ENCODE measurements at regions of chr10 and their contacts with region 1.

Region 1: GRCh38 chr10:102450194-102450938 is 977 bp downstream of the C10orf95 start:
- DNase-seq: peak; percentile 76
- H3K4me3 Mint-ChIP-seq: peak overlapping the region; percentile 89
- H3K27ac Mint-ChIP-seq: peak overlapping the region; percentile 80
- H3K4me1 Mint-ChIP-seq: peaks cover 7% of the 10 kb centered on the region
- H3K27me3 Mint-ChIP-seq: no peaks in the 10 kb centered on the region
- CTCF ChIP-seq: no peak

Region 2: GRCh38 chr10:102151774-102152544 is 298.4 kb before region 1 on chr10 and contains the start of gene NOLC1:
- CTCF ChIA-PET with region 1: no interaction called
- POLR2A ChIA-PET with region 1: interaction called, 16 read pairs
- intact Hi-C with region 1: no loop called
- DNase-seq: peak; percentile 98
- H3K4me3 Mint-ChIP-seq: peak within 1 kb of the TSS; percentile 75
- H3K27ac Mint-ChIP-seq: peak within 1 kb of the TSS; percentile 92
- H3K4me1 Mint-ChIP-seq: peaks cover 14% of the 10 kb centered on the region
- H3K27me3 Mint-ChIP-seq: no peaks in the 10 kb centered on the region
- CTCF ChIP-seq: no peak
- total RNA-seq, gene NOLC1: 122 and 168 TPM in 2 replicates

Region 3: GRCh38 chr10:102334101-102334500 is 116.3 kb before region 1 on chr10:
- CTCF ChIA-PET with region 1: no interaction called
- POLR2A ChIA-PET with region 1: no interaction called
- intact Hi-C with region 1: no loop called
- DNase-seq: no peak
- H3K4me3 Mint-ChIP-seq: no peak overlapping the region
- H3K27ac Mint-ChIP-seq: no peak overlapping the region
- H3K4me1 Mint-ChIP-seq: peaks cover 7% of the 10 kb centered on the region
- H3K27me3 Mint-ChIP-seq: no peaks in the 10 kb centered on the region
- CTCF ChIP-seq: no peak

Region 4: DNA sequence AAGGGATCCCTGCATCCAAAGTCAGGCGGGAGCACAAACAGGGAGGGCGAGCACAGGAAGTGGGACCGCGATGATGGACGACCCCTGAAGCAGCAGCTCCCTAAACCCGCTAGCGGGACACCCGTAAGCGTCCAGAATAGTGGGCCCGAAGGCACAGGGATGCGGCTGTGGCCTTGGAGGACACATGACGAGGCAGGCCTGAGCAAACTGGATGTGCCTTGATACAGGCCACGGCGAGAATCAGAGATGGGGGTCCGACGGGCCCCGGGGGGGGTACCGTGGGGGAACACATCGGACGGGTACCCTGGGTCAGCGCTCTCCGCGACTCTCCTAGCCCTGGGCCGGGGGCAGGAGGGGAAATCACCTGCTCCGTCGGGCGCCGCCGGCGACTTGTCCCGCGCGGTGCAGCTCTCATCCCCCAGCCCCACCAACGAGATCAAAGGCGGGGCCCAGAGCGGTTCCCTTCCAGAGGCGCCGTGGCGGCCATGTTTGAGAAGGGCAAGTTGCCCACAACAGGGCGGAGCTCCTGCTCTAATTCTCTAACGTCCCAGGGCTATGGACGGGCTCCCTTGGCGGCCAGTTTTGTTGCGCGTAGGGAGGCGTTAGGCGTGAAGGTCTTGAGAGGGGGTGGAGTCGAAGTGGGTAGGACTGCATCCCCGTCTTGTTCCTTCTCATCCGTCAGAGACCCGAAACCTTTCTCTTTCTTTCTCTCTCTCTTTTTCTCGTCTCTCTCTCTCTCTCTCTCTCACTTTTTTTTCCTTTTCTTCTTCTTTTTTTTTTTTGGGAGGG is 18.0 kb before region 1 on chr10 and contains the start of gene CUEDC2:
- CTCF ChIA-PET with region 1: interaction called, 3 read pairs
- POLR2A ChIA-PET with region 1: interaction called, 63 read pairs
- intact Hi-C with region 1: no loop called
- DNase-seq: peak; percentile 97
- H3K4me3 Mint-ChIP-seq: peak within 1 kb of the TSS; percentile 90
- H3K27ac Mint-ChIP-seq: peak within 1 kb of the TSS; percentile 94
- H3K4me1 Mint-ChIP-seq: peaks cover 26% of the 10 kb centered on the region
- H3K27me3 Mint-ChIP-seq: no peaks in the 10 kb centered on the region
- CTCF ChIP-seq: no peak
- total RNA-seq, gene CUEDC2: 55.0 and 64.5 TPM in 2 replicates

Region 5: DNA sequence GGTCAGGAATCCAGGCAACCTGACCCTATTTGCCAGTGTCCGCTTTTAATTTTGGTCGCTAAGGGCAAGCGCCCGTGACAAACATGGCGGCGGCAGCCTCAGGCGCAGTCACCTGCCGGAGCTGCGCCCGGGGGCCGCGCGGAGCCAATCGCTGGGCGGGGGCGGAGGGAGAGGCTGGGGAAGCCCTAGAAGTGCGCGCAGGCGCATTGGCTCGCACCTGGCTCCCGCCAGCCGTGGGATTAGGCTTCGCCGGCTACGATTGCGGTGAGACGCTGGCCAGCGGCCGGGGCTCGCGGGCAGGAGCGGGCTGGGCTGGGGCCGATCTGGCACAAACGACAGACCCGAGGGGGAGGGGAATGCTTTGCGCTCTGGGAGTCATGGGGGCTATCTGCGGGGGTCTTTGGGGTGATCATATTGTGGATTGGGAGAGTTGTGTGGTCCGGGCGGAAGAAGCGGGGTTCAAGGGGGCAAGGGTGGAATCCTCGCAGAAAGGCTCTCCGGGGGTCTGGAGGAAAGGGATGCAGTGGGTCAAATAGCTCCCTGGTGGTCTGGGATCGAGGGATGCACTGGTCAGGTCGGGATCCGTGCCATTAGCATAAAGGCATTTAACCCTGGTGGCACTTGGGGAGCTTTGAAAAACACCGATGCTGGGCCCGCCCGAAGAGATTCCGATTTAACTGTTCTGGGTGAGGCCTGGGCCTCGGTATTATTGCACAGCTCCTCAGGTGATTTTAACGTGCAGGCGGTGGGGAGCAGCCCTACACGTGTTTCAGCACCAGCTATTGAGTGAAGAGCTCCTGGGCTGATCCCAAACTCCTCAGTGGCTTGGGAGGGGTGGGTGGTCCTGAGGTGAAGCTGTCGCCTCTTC is 11.1 kb after region 1 on chr10:
- CTCF ChIA-PET with region 1: interaction called, 9 read pairs
- POLR2A ChIA-PET with region 1: interaction called, 77 read pairs
- intact Hi-C with region 1: no loop called
- DNase-seq: peak; percentile 95
- H3K4me3 Mint-ChIP-seq: peak overlapping the region; percentile 92
- H3K27ac Mint-ChIP-seq: peak overlapping the region; percentile 63
- H3K4me1 Mint-ChIP-seq: peaks cover 15% of the 10 kb centered on the region
- H3K27me3 Mint-ChIP-seq: no peaks in the 10 kb centered on the region
- CTCF ChIP-seq: no peak

Region 6: DNA sequence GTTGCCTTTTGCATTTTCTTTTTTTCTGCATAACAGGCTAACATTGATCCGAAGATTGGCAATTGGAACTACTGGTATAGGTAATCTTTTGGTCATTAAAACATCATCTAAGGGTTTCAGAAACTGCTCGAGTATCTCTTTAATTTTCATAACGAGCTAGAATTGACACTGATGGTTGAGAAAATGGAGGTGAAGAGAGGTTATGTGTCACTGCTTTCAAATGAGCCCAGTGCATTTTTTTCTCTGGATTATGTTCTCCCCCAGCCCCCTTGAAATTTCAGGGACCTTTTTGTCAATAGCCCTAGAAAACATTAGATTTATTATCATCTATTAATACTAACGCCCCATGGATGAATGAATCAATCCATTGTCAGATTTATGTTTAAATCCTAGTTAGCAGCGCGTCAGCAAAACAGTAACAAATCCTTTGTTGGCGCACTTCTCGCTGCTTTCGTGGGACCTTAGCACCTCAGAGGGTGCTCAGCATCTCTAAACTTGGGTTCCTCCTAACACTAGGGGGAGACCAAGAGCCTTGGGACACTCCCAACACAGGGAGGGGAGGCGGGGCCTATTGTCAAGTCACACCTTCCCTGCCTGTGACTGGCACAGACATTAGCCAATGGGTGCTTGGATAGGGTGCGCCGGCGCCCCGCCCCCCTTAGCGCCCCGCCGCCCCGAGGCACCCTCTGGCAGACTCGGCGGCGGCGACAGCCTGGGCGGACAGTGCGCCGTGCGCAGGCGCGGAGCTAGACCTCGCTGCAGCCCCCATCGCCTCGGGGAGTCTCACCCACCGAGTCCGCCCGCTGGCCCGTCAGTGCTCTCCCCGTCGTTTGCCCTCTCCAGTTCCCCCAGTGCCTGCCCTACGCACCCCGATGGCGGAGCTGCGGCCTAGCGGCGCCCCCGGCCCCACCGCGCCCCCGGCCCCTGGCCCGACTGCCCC is 53.2 kb after region 1 on chr10 and contains the start of gene SUFU:
- CTCF ChIA-PET with region 1: interaction called, 6 read pairs
- POLR2A ChIA-PET with region 1: interaction called, 46 read pairs
- intact Hi-C with region 1: no loop called
- DNase-seq: peak; percentile 100
- H3K4me3 Mint-ChIP-seq: no peak within 1 kb of the TSS
- H3K27ac Mint-ChIP-seq: peak within 1 kb of the TSS; percentile 65
- H3K4me1 Mint-ChIP-seq: peaks cover 16% of the 10 kb centered on the region
- H3K27me3 Mint-ChIP-seq: no peaks in the 10 kb centered on the region
- CTCF ChIP-seq: peak; percentile 75
- total RNA-seq, gene SUFU: 6.3 TPM in 2 replicates